ENCODE measurements at regions of chrX and their contacts with region 1.

Region 1: GRCh38 chrX:86887341-86887740 is 630.3 kb upstream of the KLHL4 start:
- DNase-seq: no peak
- ATAC-seq: no peak
- H3K4me3 ChIP-seq: no peak overlapping the region
- H3K4me3 Mint-ChIP-seq: no peak overlapping the region
- H3K27ac ChIP-seq: no peak overlapping the region
- H3K27ac Mint-ChIP-seq: no peak overlapping the region
- H3K4me1 ChIP-seq: no peaks in the 10 kb centered on the region
- H3K4me1 Mint-ChIP-seq: no peaks in the 10 kb centered on the region
- H3K27me3 ChIP-seq: no peaks in the 10 kb centered on the region
- H3K27me3 Mint-ChIP-seq: no peaks in the 10 kb centered on the region
- CTCF ChIP-seq: no peak

Region 2: GRCh38 chrX:86809651-86810050 is 77.7 kb before region 1 on chrX:
- CTCF ChIA-PET with region 1: no interaction called
- POLR2A ChIA-PET with region 1: no interaction called
- intact Hi-C with region 1: loop called in 1 of 2 experiments (anchors 2 kb)
- DNase-seq: no peak
- ATAC-seq: no peak
- H3K4me3 ChIP-seq: no peak overlapping the region
- H3K4me3 Mint-ChIP-seq: no peak overlapping the region
- H3K27ac ChIP-seq: no peak overlapping the region
- H3K27ac Mint-ChIP-seq: no peak overlapping the region
- H3K4me1 ChIP-seq: no peaks in the 10 kb centered on the region
- H3K4me1 Mint-ChIP-seq: no peaks in the 10 kb centered on the region
- H3K27me3 ChIP-seq: no peaks in the 10 kb centered on the region
- H3K27me3 Mint-ChIP-seq: no peaks in the 10 kb centered on the region
- CTCF ChIP-seq: no peak